ENCODE measurements at regions of chr9 and their contacts with region 1.

Region 1: GRCh38 chr9:133992780-133993634 is 883 bp upstream of the VAV2 start:
- DNase-seq: peak; percentile 84 to 90 (median 88)
- ATAC-seq: peak; percentile 68 to 87 (median 80)
- H3K4me3 ChIP-seq: peak overlapping the region; percentile 53 to 88 (median 73)
- H3K27ac ChIP-seq: peak overlapping the region; percentile 60 to 95 (median 92)
- H3K4me1 ChIP-seq: peaks cover 4 to 31% (median 20%) of the 10 kb centered on the region in 12 donors
- H3K27me3 ChIP-seq: peaks cover 0 to 4% (median 0%) of the 10 kb centered on the region in 9 donors
- CTCF ChIP-seq: peak in 11 of 12 donors; percentile 10 to 66 (median 41)
- POLR2A ChIP-seq: peak in 1 of 2 donors; percentile 49

Region 2: GRCh38 chr9:133782157-133783130 is 210.6 kb before region 1 on chr9:
- intact Hi-C with region 1: loop called in 3 of 10 experiments (anchors 1 to 2 kb)
- DNase-seq: peak; percentile 65 to 78 (median 74)
- ATAC-seq: peak in 3 of 4 donors; percentile 6 to 69 (median 64)
- H3K4me3 ChIP-seq: no peak overlapping the region
- H3K27ac ChIP-seq: no peak overlapping the region
- H3K4me1 ChIP-seq: peaks cover 0 to 17% (median 0%) of the 10 kb centered on the region in 12 donors
- H3K27me3 ChIP-seq: no peaks in the 10 kb centered on the region
- CTCF ChIP-seq: peak; percentile 65 to 89 (median 81)
- POLR2A ChIP-seq: no peak

Region 3: GRCh38 chr9:133792721-133793470 is 200.1 kb before region 1 on chr9:
- intact Hi-C with region 1: loop called (anchors 1 to 2 kb)
- DNase-seq: peak; percentile 72 to 90 (median 81)
- ATAC-seq: peak; percentile 70 to 88 (median 82)
- H3K4me3 ChIP-seq: peak overlapping the region in 3 of 12 donors; percentile 22 to 23 (median 22)
- H3K27ac ChIP-seq: no peak overlapping the region
- H3K4me1 ChIP-seq: peaks cover 0 to 33% (median 17%) of the 10 kb centered on the region in 12 donors
- H3K27me3 ChIP-seq: no peaks in the 10 kb centered on the region
- CTCF ChIP-seq: peak; percentile 91 to 99 (median 96)
- POLR2A ChIP-seq: no peak

Region 4: DNA sequence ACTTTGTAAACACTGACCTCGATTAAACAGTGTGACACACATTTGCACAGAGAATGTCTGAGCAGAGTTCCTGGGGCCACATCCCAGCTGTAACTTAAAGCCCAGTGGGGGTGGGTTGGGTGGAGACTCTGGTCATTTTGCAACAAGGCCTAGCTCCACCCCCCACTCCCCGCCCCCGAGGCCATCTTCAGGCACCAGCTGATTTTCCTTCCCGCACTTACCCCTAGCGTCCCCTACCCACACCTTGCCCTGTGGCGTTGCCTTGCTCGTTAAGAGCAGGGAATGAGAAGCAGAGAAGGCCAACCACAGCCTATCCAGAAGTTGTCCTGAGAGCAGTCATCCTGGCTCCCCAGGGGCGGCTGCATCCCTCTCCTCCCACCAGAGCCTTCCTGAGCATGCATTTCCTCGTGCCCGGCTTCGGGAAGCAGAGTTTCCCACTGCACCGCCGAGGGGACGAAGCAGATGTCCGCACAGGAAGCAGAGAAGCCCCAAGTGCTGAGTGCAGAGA is 153.1 kb before region 1 on chr9:
- intact Hi-C with region 1: loop called in 1 of 10 experiments (anchors 5 kb)
- DNase-seq: peak in 4 of 5 donors; percentile 37 to 62 (median 50)
- ATAC-seq: peak in 3 of 4 donors; percentile 47 to 68 (median 51)
- H3K4me3 ChIP-seq: no peak overlapping the region
- H3K27ac ChIP-seq: peak overlapping the region in 6 of 12 donors; percentile 12 to 63 (median 24)
- H3K4me1 ChIP-seq: peaks cover 0 to 34% (median 20%) of the 10 kb centered on the region in 12 donors
- H3K27me3 ChIP-seq: no peaks in the 10 kb centered on the region
- CTCF ChIP-seq: no peak
- POLR2A ChIP-seq: no peak

Region 5: GRCh38 chr9:133955821-133956411 is 37.1 kb before region 1 on chr9:
- intact Hi-C with region 1: loop called in 1 of 10 experiments (anchors 5 kb)
- DNase-seq: peak in 2 of 5 donors; percentile 30 to 63
- ATAC-seq: peak in 2 of 4 donors; percentile 23 to 41
- H3K4me3 ChIP-seq: peak overlapping the region in 8 of 12 donors; percentile 3 to 37 (median 16)
- H3K27ac ChIP-seq: peak overlapping the region in 9 of 12 donors; percentile 19 to 65 (median 38)
- H3K4me1 ChIP-seq: peaks cover 0 to 57% (median 38%) of the 10 kb centered on the region in 12 donors
- H3K27me3 ChIP-seq: no peaks in the 10 kb centered on the region
- CTCF ChIP-seq: no peak
- POLR2A ChIP-seq: no peak

Region 6: DNA sequence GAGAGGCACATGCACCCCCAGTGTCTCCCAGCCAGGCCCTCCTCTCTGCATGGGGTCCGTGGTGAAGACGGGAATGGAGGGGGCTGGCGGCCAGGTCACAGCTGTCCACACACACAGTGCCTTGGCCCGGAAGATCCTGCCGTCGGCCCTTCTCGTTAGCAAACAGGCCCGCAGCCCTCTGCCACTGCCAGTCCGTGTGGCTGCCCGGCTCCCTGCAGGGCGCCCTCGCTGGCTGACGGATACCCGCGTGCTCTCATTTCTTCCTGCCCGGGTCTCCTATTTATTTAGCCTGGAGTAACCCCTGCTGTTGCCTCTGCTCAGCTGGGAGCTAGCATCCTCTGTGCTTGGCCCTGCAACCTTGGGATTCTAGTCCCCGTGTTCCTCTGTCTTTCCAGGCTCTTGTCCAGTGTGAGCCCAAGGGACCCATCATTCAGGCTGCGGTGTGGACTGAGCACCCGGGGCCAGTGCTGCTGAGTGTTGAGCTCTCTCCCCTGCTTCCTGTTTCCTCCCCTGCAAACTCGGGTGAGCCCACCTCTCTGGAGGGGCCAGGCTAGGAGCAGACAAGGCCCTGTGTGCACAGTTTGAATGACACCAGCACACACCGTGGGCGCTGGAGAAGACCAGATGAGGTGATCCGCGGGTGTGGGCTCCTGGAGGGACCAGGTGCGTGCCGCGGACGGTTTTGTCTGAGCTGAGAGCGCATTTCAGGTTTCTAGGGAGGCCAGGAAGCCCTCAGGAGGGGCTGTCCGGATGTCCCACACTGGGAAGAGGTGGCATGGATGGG is 186.0 kb after region 1 on chr9:
- intact Hi-C with region 1: no loop called
- DNase-seq: peak in 4 of 5 donors; percentile 61 to 77 (median 67)
- ATAC-seq: peak; percentile 20 to 56 (median 38)
- H3K4me3 ChIP-seq: no peak overlapping the region
- H3K27ac ChIP-seq: no peak overlapping the region
- H3K4me1 ChIP-seq: peaks cover 0 to 30% (median 21%) of the 10 kb centered on the region in 12 donors
- H3K27me3 ChIP-seq: peaks cover 0 to 31% (median 10%) of the 10 kb centered on the region in 9 donors
- CTCF ChIP-seq: no peak
- POLR2A ChIP-seq: no peak

Region 7: DNA sequence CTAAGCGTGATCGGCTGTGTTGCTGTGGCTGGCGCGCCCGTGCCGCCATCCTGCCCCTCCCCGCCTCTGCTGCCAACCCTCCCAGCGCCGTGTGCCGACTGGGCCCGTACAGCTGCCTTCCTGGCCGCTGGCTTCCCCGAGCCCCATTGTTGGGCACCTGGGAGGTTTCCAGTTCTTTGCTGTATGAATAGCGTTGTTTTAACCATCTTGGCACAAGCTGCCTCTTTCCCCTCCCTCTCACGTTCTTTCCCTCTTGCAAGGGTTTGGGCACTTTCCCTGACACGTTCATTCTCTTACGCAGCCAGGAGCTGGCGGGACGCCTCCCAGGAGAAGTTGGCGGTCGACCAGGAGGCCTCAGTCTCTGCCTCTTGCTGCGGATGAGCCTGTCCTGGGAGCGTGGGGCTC is 290.1 kb after region 1 on chr9:
- intact Hi-C with region 1: no loop called
- DNase-seq: peak; percentile 45 to 87 (median 80)
- ATAC-seq: peak; percentile 69 to 84 (median 75)
- H3K4me3 ChIP-seq: no peak overlapping the region
- H3K27ac ChIP-seq: peak overlapping the region; percentile 21 to 83 (median 67)
- H3K4me1 ChIP-seq: peaks cover 0 to 25% (median 13%) of the 10 kb centered on the region in 12 donors
- H3K27me3 ChIP-seq: peaks cover 0 to 3% (median 0%) of the 10 kb centered on the region in 9 donors
- CTCF ChIP-seq: no peak
- POLR2A ChIP-seq: no peak